ENCODE measurements at regions of chr21 and their contacts with region 1.

Region 1: DNA sequence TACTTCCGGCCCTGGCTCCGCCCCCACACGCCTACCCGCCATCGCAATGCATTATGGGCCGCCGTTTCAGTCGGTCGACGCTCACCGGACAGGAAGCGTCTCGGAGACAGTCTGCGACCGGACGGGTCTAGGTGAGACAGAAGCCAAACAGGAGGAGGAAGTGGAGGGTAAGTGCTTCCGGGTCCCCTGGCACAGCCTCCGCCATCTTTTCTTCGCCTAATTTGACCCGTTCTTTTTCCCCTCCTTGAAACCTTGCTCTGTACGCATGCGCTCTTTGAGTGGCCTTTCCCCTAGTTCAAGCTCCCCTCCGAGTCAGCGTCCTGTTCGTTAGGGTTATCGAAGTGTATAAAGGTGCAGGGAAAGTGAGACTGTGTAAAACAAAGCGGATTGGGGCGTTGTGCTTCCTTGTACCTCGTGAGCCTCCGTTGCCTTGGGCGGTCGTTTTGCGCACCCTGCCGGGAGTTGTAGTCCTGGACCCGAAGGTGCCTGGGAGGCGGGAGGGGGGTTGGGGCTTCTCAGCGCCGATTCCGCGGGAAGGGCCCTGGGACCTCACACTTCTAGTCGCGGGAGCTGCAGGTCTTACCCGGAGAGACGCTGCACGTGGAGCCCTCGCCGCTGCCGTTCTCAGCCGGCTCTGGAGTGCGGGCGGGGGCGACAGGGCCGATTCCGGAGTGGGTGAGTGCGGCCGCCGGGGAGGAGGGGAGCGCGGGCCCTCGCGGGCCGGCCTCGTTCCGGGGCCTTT is at the starts of genes ATP5PF and GABPA:
- DNase-seq: peak; percentile 99
- H3K4me3 Mint-ChIP-seq: peak within 1 kb of the TSS; percentile 98
- H3K27ac Mint-ChIP-seq: peak within 1 kb of the TSS; percentile 100
- H3K4me1 Mint-ChIP-seq: peaks cover 52% of the 10 kb centered on the region
- H3K27me3 Mint-ChIP-seq: peaks cover 1% of the 10 kb centered on the region
- total RNA-seq, gene ATP5PF: 150 to 151 TPM
- total RNA-seq, gene GABPA: 22.3 to 24.7 TPM

Region 2: GRCh38 chr21:25396135-25396711 is 338.9 kb before region 1 on chr21:
- CTCF ChIA-PET with region 1: no interaction called
- POLR2A ChIA-PET with region 1: no interaction called
- intact Hi-C with region 1: loop called (anchors 1 kb)
- DNase-seq: peak; percentile 89
- H3K4me3 Mint-ChIP-seq: peak overlapping the region; percentile 24
- H3K27ac Mint-ChIP-seq: peak overlapping the region; percentile 77
- H3K4me1 Mint-ChIP-seq: peaks cover 15% of the 10 kb centered on the region
- H3K27me3 Mint-ChIP-seq: no peaks in the 10 kb centered on the region

Region 3: GRCh38 chr21:25507522-25507921 is 227.6 kb before region 1 on chr21:
- CTCF ChIA-PET with region 1: no interaction called
- POLR2A ChIA-PET with region 1: no interaction called
- intact Hi-C with region 1: loop called (anchors 10 kb)
- DNase-seq: no peak
- H3K4me3 Mint-ChIP-seq: peak overlapping the region; percentile 24
- H3K27ac Mint-ChIP-seq: peak overlapping the region; percentile 85
- H3K4me1 Mint-ChIP-seq: peaks cover 55% of the 10 kb centered on the region
- H3K27me3 Mint-ChIP-seq: no peaks in the 10 kb centered on the region

Region 4: GRCh38 chr21:25626757-25627156 is 108.3 kb before region 1 on chr21:
- CTCF ChIA-PET with region 1: no interaction called
- POLR2A ChIA-PET with region 1: no interaction called
- intact Hi-C with region 1: no loop called
- DNase-seq: no peak
- H3K4me3 Mint-ChIP-seq: no peak overlapping the region
- H3K27ac Mint-ChIP-seq: no peak overlapping the region
- H3K4me1 Mint-ChIP-seq: no peaks in the 10 kb centered on the region
- H3K27me3 Mint-ChIP-seq: no peaks in the 10 kb centered on the region

Region 5: GRCh38 chr21:25639551-25640201 is 95.4 kb before region 1 on chr21:
- CTCF ChIA-PET with region 1: no interaction called
- POLR2A ChIA-PET with region 1: no interaction called
- intact Hi-C with region 1: loop called (anchors 1 kb)
- DNase-seq: peak; percentile 58
- H3K4me3 Mint-ChIP-seq: peak overlapping the region; percentile 57
- H3K27ac Mint-ChIP-seq: no peak overlapping the region
- H3K4me1 Mint-ChIP-seq: peaks cover 30% of the 10 kb centered on the region
- H3K27me3 Mint-ChIP-seq: peaks cover 25% of the 10 kb centered on the region

Region 6: DNA sequence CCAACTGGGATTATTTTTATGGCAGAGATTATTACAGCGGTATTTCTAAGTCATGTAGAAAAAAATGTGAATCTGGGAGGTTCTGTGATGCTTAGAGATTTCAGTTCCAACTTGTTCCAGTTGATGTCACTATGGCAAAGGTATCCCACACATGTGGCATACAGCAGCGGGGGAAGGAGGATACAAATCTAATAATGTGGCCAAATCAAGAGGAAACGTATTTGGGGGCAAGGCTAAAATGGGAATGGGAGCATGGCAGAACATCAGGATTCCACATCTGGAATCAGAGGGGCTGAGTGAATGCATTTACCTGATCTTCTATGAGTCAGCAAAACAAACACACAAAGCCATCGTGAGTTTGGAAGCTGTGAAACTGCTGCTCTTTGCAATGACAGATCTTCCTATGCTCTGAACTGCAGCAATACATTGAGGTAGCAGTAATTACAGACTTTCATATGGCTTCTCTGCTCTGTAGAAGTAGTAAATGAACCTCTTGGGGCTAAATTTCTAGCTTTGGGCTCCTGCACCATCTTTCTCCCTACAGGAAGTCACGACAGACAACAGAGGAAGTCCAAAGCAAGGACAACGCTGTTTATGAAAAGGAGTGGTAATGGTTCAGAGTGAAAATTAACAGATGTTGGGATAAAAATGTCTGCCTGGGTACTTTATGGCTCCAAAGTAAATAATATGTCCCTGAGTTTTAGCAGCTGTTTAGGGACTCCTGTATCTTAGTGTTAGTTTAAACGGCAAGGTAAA is 55.2 kb after region 1 on chr21:
- CTCF ChIA-PET with region 1: no interaction called
- POLR2A ChIA-PET with region 1: interaction called, 3 read pairs
- intact Hi-C with region 1: loop called (anchors 1 kb)
- DNase-seq: peak; percentile 19
- H3K4me3 Mint-ChIP-seq: peak overlapping the region; percentile 60
- H3K27ac Mint-ChIP-seq: peak overlapping the region; percentile 26
- H3K4me1 Mint-ChIP-seq: peaks cover 10% of the 10 kb centered on the region
- H3K27me3 Mint-ChIP-seq: peaks cover 9% of the 10 kb centered on the region

Region 7: DNA sequence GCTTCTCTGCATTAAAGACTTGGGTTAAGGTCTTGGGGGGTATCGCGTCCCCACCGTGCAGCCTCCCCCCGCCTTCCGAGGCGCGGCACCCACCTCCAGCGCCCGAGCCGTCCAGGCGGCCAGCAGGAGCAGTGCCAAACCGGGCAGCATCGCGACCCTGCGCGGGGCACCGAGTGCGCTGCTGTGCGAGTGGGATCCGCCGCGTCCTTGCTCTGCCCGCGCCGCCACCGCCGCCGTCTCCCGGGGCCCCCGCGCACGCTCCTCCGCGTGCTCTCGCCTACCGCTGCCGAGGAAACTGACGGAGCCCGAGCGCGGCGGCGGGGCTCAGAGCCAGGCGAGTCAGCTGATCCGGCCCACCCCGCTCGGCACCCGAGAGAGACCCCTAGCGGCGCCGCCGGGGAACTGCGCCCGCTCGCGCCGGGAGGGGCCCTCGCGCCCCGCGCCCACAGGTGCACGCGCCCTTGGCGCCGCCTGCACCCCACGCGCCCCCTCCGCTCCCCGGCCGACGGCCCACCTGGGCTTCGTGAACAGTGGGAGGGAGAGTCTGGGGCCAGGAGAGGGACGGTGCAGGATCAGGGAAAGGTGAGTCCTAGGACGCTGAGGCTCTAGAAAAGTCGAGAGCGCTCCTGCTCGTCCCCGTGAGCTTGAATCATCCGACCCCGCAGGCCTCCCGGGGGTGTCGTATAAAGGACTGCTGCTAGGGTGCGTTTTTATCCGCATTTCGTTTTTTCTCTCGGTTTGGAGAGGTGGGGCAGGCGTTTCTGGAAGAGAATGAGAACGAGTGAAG is 435.6 kb after region 1 on chr21 and contains the start of gene APP:
- CTCF ChIA-PET with region 1: no interaction called
- POLR2A ChIA-PET with region 1: no interaction called
- intact Hi-C with region 1: loop called (anchors 1 kb)
- DNase-seq: peak; percentile 91
- H3K4me3 Mint-ChIP-seq: peak within 1 kb of the TSS; percentile 88
- H3K27ac Mint-ChIP-seq: peak within 1 kb of the TSS; percentile 44
- H3K4me1 Mint-ChIP-seq: peaks cover 15% of the 10 kb centered on the region
- H3K27me3 Mint-ChIP-seq: peaks cover 2% of the 10 kb centered on the region
- total RNA-seq, gene APP: 46.3 to 47.1 TPM